B cell (primary cell): ENCODE measurements at regions of chr6 and their contacts with region 1.

Region 1: GRCh38 chr6:28383235-28384142 is 16.1 kb downstream of the ZSCAN12 start:
- DNase-seq: peak; percentile 93
- ATAC-seq: peak; percentile 98
- H3K4me3 ChIP-seq: peak overlapping the region; percentile 45 to 64 (median 55)
- H3K4me3 Mint-ChIP-seq: peak overlapping the region; percentile 92
- H3K27ac ChIP-seq: peak overlapping the region; percentile 75 to 93
- H3K27ac Mint-ChIP-seq: peak overlapping the region; percentile 94
- H3K4me1 ChIP-seq: peaks cover 11 to 16% of the 10 kb centered on the region in 2 donors
- H3K4me1 Mint-ChIP-seq: peaks cover 19% of the 10 kb centered on the region
- H3K27me3 ChIP-seq: no peaks in the 10 kb centered on the region
- H3K27me3 Mint-ChIP-seq: no peaks in the 10 kb centered on the region
- CTCF ChIP-seq: peak; percentile 42

Region 2: DNA sequence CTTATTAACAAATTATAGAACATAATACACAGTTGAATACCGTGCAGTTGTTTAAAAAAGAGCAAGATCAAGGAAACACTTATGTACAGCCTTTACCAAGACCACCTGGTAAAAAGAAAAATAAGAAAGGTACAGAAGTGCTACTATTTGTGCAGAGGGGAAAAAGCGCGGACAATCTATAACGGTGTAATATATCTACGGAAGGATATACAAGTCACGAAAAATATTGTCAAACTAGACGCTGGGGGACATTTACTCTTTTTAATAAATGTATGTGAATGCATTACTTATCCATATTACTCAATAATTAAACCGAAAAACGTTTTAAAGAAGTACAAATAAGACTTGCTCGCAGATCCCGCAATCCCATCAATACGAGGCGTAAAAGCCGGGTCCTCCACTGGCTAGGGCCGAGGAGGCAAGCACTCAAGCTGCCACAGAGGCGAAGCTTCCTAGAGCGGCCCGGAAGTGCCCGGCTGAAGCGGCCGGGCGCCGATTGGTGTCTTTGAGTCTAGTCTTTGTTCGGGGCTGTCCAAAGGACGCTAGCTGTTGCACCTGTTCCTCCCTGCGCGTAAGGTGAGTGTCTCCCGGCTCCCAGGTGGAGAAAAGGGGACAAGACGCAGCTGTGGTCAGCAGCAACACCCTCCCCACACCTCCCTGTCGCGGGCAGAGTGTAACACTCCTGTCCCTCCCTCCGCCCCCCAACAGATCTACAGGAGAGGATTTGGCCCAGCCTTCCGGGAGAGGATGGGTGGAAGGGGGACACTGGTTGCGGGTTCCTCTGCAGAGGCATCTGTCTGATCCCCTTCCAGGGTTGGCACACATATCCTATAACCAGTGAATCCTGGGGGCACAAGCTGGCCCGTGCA is 259.2 kb before region 1 on chr6 and contains the start of gene ZSCAN16:
- CTCF ChIA-PET with region 1: interaction called, 5 read pairs
- POLR2A ChIA-PET with region 1: no interaction called
- intact Hi-C with region 1: loop called (anchors 1 kb)
- DNase-seq: peak; percentile 86
- ATAC-seq: peak; percentile 96
- H3K4me3 ChIP-seq: peak within 1 kb of the TSS; percentile 70 to 91 (median 75)
- H3K4me3 Mint-ChIP-seq: peak within 1 kb of the TSS; percentile 98
- H3K27ac ChIP-seq: peak within 1 kb of the TSS; percentile 68 to 74
- H3K27ac Mint-ChIP-seq: peak within 1 kb of the TSS; percentile 92
- H3K4me1 ChIP-seq: peaks cover 12 to 18% of the 10 kb centered on the region in 2 donors
- H3K4me1 Mint-ChIP-seq: peaks cover 31% of the 10 kb centered on the region
- H3K27me3 ChIP-seq: no peaks in the 10 kb centered on the region
- H3K27me3 Mint-ChIP-seq: no peaks in the 10 kb centered on the region
- CTCF ChIP-seq: no peak
- total RNA-seq, gene ZSCAN16: 15.4 and 15.8 TPM in 2 replicates

Region 3: DNA sequence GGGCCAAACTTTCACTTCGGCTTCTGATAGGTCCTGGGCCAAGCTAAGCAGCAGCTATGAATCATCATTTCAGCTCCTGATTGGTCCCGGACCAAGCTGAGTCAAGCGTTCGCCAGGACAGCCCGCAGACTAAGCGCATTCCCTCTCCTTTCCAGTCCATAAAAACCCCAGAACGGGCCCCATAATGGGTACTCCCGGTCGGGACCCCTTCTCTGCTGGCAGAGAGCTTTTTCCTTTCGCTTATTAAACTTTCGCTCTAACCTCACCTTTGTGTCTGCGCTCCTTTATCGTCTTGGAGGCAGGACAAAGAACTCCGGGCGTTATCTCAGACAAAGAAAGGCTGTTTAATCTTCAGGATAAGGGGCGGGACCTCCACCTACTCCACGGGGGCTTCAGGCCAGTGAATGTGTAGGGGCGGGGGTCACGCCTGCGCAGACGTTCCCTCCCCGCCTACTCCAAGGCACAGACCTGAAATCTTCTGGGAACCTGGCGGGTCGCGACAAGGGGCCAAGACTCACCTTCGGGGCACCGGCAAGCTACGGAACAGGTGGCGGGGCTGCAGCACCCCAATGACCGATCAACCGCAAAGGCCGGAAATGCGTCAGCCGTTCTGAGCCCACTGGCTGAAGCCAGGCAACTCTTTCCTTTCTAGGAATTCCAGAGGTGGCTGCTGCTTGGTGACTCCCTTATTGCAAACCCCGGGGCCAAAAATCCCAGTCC is 47.8 kb before region 1 on chr6 and contains the start of gene ZSCAN31:
- CTCF ChIA-PET with region 1: interaction called, 3 read pairs
- POLR2A ChIA-PET with region 1: no interaction called
- intact Hi-C with region 1: loop called (anchors 1 kb)
- DNase-seq: peak; percentile 89
- ATAC-seq: peak; percentile 87
- H3K4me3 ChIP-seq: peak within 1 kb of the TSS; percentile 72 to 98 (median 86)
- H3K4me3 Mint-ChIP-seq: no peak within 1 kb of the TSS
- H3K27ac ChIP-seq: peak within 1 kb of the TSS; percentile 95 to 96
- H3K27ac Mint-ChIP-seq: no peak within 1 kb of the TSS
- H3K4me1 ChIP-seq: peaks cover 11 to 18% of the 10 kb centered on the region in 2 donors
- H3K4me1 Mint-ChIP-seq: no peaks in the 10 kb centered on the region
- H3K27me3 ChIP-seq: no peaks in the 10 kb centered on the region
- H3K27me3 Mint-ChIP-seq: no peaks in the 10 kb centered on the region
- CTCF ChIP-seq: no peak
- total RNA-seq, gene ZSCAN31: 2.9 and 4.6 TPM in 2 replicates

Region 4: GRCh38 chr6:28355743-28356665 is 27.5 kb before region 1 on chr6:
- CTCF ChIA-PET with region 1: interaction called, 37 read pairs
- POLR2A ChIA-PET with region 1: no interaction called
- intact Hi-C with region 1: no loop called
- DNase-seq: peak; percentile 81
- ATAC-seq: peak; percentile 87
- H3K4me3 ChIP-seq: peak overlapping the region; percentile 48 to 70 (median 61)
- H3K4me3 Mint-ChIP-seq: peak overlapping the region; percentile 99
- H3K27ac ChIP-seq: no peak overlapping the region
- H3K27ac Mint-ChIP-seq: peak overlapping the region; percentile 87
- H3K4me1 ChIP-seq: peaks cover 2 to 17% of the 10 kb centered on the region in 2 donors
- H3K4me1 Mint-ChIP-seq: peaks cover 18% of the 10 kb centered on the region
- H3K27me3 ChIP-seq: no peaks in the 10 kb centered on the region
- H3K27me3 Mint-ChIP-seq: no peaks in the 10 kb centered on the region
- CTCF ChIP-seq: peak; percentile 84

Region 5: GRCh38 chr6:28399350-28400121 is 16.0 kb after region 1 on chr6 and contains the start of gene ZSCAN12:
- CTCF ChIA-PET with region 1: interaction called, 60 read pairs
- POLR2A ChIA-PET with region 1: interaction called, 6 read pairs
- intact Hi-C with region 1: loop called (anchors 1 kb)
- DNase-seq: peak; percentile 91
- ATAC-seq: peak; percentile 91
- H3K4me3 ChIP-seq: peak within 1 kb of the TSS; percentile 67 to 96 (median 75)
- H3K4me3 Mint-ChIP-seq: peak within 1 kb of the TSS; percentile 93
- H3K27ac ChIP-seq: peak within 1 kb of the TSS; percentile 35 to 87
- H3K27ac Mint-ChIP-seq: peak within 1 kb of the TSS; percentile 92
- H3K4me1 ChIP-seq: peaks cover 16 to 17% of the 10 kb centered on the region in 2 donors
- H3K4me1 Mint-ChIP-seq: peaks cover 34% of the 10 kb centered on the region
- H3K27me3 ChIP-seq: peaks cover 0 to 17% (median 8%) of the 10 kb centered on the region in 4 experiments
- H3K27me3 Mint-ChIP-seq: peaks cover 40% of the 10 kb centered on the region
- CTCF ChIP-seq: peak; percentile 78
- total RNA-seq, gene ZSCAN12: 14.8 and 15.6 TPM in 2 replicates